Activated CD4-positive, alpha-beta memory T cell treated with anti-CD3 and anti-CD28 coated beads, Interleukin-2, amount 10 ng/mL, durations not matched to agents 7 days and 5 days (primary cell): ENCODE measurements at regions of chr11 and their contacts with region 1.

Region 1: GRCh38 chr11:8682303-8683114 is at the starts of genes RPL27A and TRIM66:
- DNase-seq: peak; percentile 99
- H3K4me3 Mint-ChIP-seq: peak within 1 kb of the TSS; percentile 90
- H3K27ac Mint-ChIP-seq: peak within 1 kb of the TSS; percentile 94
- H3K4me1 Mint-ChIP-seq: peaks cover 50% of the 10 kb centered on the region
- H3K27me3 Mint-ChIP-seq: no peaks in the 10 kb centered on the region
- total RNA-seq, gene RPL27A: 817 to 856 TPM
- total RNA-seq, gene TRIM66: 17.8 to 22.4 TPM

Region 2: DNA sequence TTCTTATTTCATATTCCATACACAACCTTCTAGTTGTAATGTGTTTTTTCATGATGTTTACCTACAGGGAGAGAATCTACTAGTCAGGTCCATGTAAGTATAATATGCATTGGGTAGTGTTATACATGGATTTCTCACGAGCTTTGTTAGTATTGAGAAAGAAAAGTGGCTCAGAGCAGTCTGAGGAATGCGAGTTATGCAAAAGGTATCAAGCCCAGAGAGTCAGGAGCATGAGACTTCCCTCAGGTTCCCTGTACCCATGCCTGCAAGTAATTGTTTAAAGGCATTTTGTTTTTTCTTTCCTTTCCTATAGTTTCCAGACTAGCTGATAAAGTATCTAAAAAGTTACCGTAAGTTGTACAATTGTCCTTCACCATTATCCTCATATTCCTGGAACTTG is 154.6 kb before region 1 on chr11:
- CTCF ChIA-PET with region 1: no interaction called
- POLR2A ChIA-PET with region 1: no interaction called
- DNase-seq: no peak
- H3K4me3 Mint-ChIP-seq: no peak overlapping the region
- H3K27ac Mint-ChIP-seq: no peak overlapping the region
- H3K4me1 Mint-ChIP-seq: no peaks in the 10 kb centered on the region
- H3K27me3 Mint-ChIP-seq: peaks cover 4% of the 10 kb centered on the region

Region 3: GRCh38 chr11:8646873-8647272 is 35.6 kb before region 1 on chr11:
- CTCF ChIA-PET with region 1: no interaction called
- POLR2A ChIA-PET with region 1: interaction called, 11 read pairs
- DNase-seq: no peak
- H3K4me3 Mint-ChIP-seq: no peak overlapping the region
- H3K27ac Mint-ChIP-seq: no peak overlapping the region
- H3K4me1 Mint-ChIP-seq: peaks cover 7% of the 10 kb centered on the region
- H3K27me3 Mint-ChIP-seq: no peaks in the 10 kb centered on the region

Region 4: DNA sequence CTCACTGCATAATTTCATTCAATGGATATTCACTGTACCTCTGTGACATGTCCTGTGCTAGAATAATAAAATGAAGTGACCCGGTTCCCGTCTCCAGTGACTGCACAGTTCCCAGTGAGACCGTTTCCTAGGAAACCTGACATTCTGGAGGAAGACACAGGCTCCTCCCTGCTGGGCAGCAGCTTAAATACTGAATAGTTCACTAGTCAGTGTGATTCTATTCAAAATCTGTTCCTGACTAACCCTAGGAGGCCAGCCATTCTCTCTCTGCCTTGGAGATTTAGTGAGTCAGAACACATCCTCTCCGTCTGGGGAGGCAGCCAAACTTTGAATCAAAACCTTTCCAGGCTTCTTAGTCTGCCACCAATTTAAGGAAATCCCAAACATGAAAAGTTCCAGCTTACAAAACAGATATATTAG is 11.3 kb before region 1 on chr11:
- CTCF ChIA-PET with region 1: no interaction called
- POLR2A ChIA-PET with region 1: interaction called, 55 read pairs
- DNase-seq: no peak
- H3K4me3 Mint-ChIP-seq: no peak overlapping the region
- H3K27ac Mint-ChIP-seq: no peak overlapping the region
- H3K4me1 Mint-ChIP-seq: peaks cover 13% of the 10 kb centered on the region
- H3K27me3 Mint-ChIP-seq: no peaks in the 10 kb centered on the region

Region 5: GRCh38 chr11:8911029-8911826 is 228.7 kb after region 1 on chr11 and contains the start of gene AKIP1:
- CTCF ChIA-PET with region 1: interaction called, 3 read pairs
- POLR2A ChIA-PET with region 1: interaction called, 11 read pairs
- DNase-seq: peak; percentile 84
- H3K4me3 Mint-ChIP-seq: peak within 1 kb of the TSS; percentile 94
- H3K27ac Mint-ChIP-seq: peak within 1 kb of the TSS; percentile 84
- H3K4me1 Mint-ChIP-seq: peaks cover 51% of the 10 kb centered on the region
- H3K27me3 Mint-ChIP-seq: peaks cover 6% of the 10 kb centered on the region
- total RNA-seq, gene AKIP1: 36.0 to 38.1 TPM

Region 6: GRCh38 chr11:9384535-9385303 is 702.2 kb after region 1 on chr11 and contains the start of gene IPO7:
- CTCF ChIA-PET with region 1: no interaction called
- POLR2A ChIA-PET with region 1: interaction called, 11 read pairs
- DNase-seq: peak; percentile 92
- H3K4me3 Mint-ChIP-seq: peak within 1 kb of the TSS; percentile 85
- H3K27ac Mint-ChIP-seq: peak within 1 kb of the TSS; percentile 87
- H3K4me1 Mint-ChIP-seq: peaks cover 32% of the 10 kb centered on the region
- H3K27me3 Mint-ChIP-seq: no peaks in the 10 kb centered on the region
- total RNA-seq, gene IPO7: 87.4 to 95.7 TPM